Ascending aorta (tissue), 2 donors: ENCODE measurements at regions of chr11 and their contacts with region 1.

Region 1: DNA sequence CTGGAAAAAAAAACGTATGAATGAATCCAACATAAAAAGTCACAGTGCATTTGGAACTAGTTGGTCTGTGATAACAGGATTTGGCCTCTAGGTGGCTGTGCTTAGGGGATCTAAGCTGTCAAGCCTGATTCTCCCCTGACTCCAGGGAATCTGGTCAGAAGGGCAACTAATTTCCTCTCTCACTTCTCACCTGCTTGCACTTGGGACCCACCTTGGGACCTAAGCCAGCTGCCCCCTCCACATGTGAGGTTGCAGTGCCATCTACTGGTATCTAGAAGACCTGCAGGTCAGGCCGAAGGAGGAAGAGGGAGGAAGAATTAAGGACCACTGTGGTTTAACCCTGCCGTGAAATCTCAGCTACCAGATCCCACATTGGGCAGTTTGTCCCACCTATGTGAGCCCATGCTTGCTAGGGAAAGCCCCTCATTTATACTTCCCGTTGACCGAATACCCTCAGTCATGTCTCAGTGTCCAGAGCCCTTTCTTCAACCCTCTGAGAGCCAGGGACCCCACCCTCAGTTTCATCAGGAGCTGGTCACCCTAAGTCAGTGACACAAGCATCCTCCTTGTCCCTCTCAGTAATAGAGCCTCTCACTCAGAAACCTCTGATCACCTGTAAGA is 33.2 kb upstream of the CAVIN3 start:
- DNase-seq: peak in 1 of 2 donors; percentile 72
- H3K4me3 ChIP-seq: no peak overlapping the region
- H3K27ac ChIP-seq: no peak overlapping the region
- H3K4me1 ChIP-seq: peaks cover 5 to 10% of the 10 kb centered on the region in 2 donors
- H3K27me3 ChIP-seq: no peaks in the 10 kb centered on the region
- CTCF ChIP-seq: peak; percentile 81 to 96 (median 95)

Region 2: DNA sequence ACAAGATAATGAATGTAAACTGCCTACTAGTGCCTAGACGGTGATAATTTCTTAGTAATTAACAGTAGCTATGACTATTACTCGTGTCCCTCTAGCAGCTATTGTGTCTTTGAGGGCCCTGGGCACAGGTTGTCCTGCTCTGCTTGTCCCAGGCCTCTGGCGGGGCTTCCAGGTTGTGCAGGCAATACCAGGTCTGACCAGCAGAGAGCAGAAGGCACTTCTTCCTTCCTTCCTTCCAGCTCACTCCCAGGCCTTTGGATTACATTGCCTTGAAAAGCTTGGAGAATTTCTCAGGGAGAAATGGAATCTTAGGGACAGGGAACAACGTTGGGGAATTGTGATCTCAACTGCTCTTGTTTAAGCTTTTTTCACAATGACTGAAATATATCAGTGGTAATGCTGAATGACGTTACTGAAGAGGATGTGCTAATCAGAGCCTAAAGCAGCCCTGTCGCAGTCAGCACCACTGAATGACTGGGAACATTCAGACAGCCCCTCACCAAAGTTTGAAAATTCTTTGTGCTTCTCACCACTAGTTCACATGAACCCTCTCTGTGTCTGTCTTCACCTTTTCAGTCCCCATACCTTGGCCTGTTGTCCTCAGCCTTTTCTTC is 102.2 kb before region 1 on chr11:
- intact Hi-C with region 1: loop called (anchors 1 kb)
- DNase-seq: peak in 1 of 2 donors; percentile 78
- H3K4me3 ChIP-seq: no peak overlapping the region
- H3K27ac ChIP-seq: peak overlapping the region in 1 of 2 donors; percentile 5
- H3K4me1 ChIP-seq: peaks cover 0 to 2% of the 10 kb centered on the region in 2 donors
- H3K27me3 ChIP-seq: no peaks in the 10 kb centered on the region
- CTCF ChIP-seq: peak; percentile 72 to 87 (median 84)

Region 3: DNA sequence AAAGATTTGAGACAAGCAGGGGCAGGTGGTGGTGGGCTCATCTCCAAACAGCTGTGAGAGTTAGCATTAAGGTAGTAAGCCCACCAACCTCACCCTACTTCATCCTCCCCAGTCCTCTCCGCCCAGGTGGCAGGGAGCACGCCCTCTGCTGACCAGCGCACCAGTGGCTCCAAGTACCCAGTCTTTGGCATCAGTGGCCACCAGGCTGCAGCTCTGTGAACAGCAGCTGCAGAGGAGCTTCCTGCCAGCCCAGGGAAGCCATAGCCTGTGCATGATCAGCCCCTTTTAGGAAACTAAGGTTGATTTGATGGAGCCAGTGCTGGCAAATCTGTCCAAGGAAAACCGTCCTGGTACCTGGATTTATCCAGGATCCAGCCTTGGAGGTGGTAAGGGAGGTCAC is 54.9 kb before region 1 on chr11:
- intact Hi-C with region 1: loop called (anchors 1 kb)
- DNase-seq: no peak
- H3K4me3 ChIP-seq: no peak overlapping the region
- H3K27ac ChIP-seq: no peak overlapping the region
- H3K4me1 ChIP-seq: no peaks in the 10 kb centered on the region
- H3K27me3 ChIP-seq: no peaks in the 10 kb centered on the region
- CTCF ChIP-seq: peak; percentile 17 to 55 (median 41)